ENCODE measurements at regions of chr1 and their contacts with region 1.

Region 1: GRCh38 chr1:19091196-19091953 is 118.7 kb downstream of the UBR4 start:
- DNase-seq: no peak
- H3K4me3 ChIP-seq: no peak overlapping the region
- H3K27ac ChIP-seq: no peak overlapping the region
- H3K4me1 ChIP-seq: peaks cover 0 to 36% (median 0%) of the 10 kb centered on the region in 3 donors
- H3K27me3 ChIP-seq: no peaks in the 10 kb centered on the region
- CTCF ChIP-seq: no peak
- POLR2A ChIP-seq: no peak

Region 2: DNA sequence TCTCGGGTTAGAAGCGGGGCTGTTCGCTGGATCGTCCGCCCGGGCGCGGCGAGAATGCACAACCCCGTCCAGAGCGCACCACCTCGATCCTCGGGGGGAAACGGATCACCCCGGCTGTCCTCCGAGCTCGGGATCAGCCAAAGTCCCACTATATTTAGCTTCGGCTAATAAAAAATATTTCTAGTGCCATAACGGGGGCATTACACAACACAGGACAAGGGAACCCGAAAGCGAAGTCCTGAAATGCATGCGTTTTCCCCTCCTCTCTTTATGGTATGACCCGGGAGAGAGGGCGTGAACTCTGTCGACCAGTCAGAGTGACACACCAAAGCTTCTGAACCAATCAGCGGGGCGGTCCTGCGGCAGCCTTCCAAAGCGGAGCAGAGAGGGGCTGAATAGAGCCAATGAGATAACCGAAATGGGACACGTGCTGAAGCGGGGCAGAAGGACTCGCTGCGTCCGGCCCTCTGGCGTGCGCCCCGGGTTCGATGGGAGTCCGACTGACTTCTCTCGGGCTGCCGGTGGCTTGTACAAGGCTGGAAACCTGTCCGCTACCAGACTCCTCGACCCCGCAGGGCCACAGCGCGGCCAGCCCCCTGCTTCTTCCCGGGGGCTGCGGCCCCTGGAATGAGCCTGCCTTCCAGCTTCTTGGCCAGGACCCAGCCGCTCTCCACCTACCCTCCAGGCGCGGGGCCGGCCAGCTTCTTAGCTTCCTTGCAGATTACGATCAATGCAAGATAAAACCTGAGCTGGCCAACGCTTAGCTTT is 188.7 kb before region 1 on chr1 and contains the start of gene ALDH4A1:
- intact Hi-C with region 1: loop called (anchors 5 kb)
- DNase-seq: peak; percentile 89
- H3K4me3 ChIP-seq: peak within 1 kb of the TSS; percentile 66 to 91 (median 78)
- H3K27ac ChIP-seq: peak within 1 kb of the TSS; percentile 93 to 97 (median 95)
- H3K4me1 ChIP-seq: peaks cover 4 to 63% (median 29%) of the 10 kb centered on the region in 3 donors
- H3K27me3 ChIP-seq: no peaks in the 10 kb centered on the region
- CTCF ChIP-seq: peak in 1 of 6 experiments; percentile 3
- POLR2A ChIP-seq: peak in 1 of 4 donors; percentile 24
- total RNA-seq, gene ALDH4A1: 36.7 to 59.1 (median 50.3) TPM